Dendritic cell treated with granulocyte-macrophage colony-stimulating factor and Interleukin-4, amounts not matched to agents 40 ng/mL and 50 ng/mL, for 4 days (primary cell): ENCODE measurements at regions of chr12 and their contacts with region 1.

Region 1: DNA sequence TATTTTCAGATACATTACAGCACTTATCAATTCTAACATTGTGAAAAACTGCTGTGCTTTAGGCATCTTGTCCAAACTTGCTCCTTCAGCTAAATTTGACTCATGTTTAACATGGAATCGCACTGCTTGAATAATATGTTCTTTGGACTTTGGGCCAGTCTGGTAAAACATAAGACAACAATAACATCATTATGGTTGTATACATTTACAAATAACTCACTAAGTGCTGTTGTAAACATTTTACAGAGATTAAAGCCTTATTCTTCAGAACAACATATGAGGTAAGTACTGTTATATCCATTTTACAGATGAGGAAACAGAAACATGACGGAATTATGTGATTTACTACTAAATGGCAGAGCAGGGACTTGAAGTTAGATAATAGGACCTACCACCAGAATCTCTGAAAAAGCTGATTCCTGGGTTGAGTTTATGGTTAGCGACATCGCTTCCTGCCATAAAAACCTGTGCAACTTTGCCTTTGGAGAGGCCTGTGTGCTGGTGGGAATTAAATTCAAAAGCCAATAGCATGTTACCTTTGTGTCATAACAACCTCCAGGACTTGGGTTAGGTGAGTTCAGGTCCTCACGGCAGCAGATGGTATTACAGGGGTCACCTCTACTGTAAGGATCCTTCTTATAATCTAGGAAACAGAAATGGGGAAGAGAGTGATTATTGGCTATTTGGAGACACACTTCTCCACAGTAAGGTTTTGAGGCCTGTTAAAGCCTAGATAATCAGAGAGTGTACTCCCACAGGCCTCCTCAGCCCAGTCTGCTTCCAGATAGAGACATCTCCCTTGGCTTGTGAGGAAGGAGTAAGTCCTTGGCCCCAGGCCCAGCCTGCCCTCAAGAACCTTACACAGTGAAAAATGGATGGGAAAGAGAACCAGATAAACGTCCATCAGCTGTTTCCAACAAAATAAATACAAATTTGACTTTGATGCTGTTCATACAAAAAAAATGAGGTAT is 61.8 kb downstream of the PLBD1 start:
- H3K4me3 Mint-ChIP-seq: no peak overlapping the region
- H3K27ac Mint-ChIP-seq: no peak overlapping the region
- H3K4me1 Mint-ChIP-seq: peaks cover 5% of the 10 kb centered on the region
- H3K27me3 Mint-ChIP-seq: no peaks in the 10 kb centered on the region

Region 2: DNA sequence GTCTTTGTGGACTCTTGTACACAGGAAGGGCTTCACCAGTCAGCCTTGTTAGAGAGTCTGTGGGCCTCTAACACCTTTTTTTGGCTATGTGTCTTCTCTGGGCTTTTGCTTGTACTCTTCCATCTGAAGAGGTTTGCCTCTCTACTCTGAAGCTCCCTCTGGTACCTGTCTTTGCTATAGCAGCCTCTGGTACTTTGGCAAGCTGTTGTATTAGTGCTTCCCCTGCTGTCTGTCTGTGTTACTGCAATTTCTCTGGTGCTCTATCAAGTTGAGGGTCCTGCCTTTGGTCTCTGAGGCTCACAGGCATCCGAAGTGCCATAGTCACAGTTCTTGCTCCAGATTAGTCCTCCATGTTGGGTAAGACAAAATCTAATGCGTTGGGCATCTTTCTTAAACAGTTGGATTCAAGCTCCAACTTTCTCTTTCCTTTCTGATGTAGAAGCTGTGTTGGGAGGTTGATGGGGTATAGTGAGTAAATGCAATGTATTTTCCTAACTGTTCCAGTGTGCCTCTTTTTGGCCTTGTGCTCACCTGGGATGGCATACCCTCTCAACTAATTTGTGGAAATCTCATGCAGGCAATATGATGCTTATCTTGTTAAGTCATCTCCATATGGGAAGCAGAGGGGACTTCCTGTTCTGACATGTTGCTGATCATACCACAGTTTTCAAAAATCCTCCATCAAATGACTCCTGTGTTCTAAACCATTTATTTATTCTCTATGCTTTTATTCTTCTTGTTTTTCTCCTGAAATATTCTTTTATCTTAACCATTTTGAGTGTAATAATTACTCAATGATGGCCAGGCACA is 51.6 kb before region 1 on chr12:
- intact Hi-C with region 1: loop called (anchors 5 kb)
- H3K4me3 Mint-ChIP-seq: no peak overlapping the region
- H3K27ac Mint-ChIP-seq: no peak overlapping the region
- H3K4me1 Mint-ChIP-seq: peaks cover 27% of the 10 kb centered on the region
- H3K27me3 Mint-ChIP-seq: no peaks in the 10 kb centered on the region

Region 3: DNA sequence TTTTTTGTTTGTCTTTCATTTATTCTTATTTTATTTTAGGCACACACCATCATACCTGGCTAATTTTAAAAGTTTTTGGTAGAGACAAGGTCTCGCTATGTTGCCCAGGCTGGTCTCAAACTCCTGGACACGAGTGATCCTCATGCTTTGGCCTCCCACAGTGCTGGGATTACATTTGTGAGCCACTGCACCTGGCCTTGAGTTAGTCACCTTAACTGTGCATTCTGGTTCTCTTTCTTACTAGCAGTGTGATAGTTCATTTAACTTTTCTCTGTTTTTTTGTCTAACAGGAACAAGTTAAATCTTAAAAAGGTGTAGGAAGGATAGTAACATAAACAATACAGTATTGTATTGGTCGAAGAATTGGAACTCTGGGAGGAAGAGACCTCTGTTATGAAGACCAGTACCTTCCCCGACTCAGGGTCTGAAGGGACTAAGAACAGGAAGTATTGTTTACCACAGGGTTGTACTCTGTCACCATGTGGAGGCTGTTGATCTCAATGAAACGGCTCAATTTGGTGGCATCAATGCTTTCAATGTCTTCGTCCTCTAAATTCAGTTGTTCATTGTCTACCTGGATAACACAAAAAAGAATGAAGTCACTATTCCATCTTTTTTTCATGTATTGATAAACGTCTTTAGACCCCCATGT is 414.7 kb after region 1 on chr12:
- intact Hi-C with region 1: no loop called
- H3K4me3 Mint-ChIP-seq: no peak overlapping the region
- H3K27ac Mint-ChIP-seq: no peak overlapping the region
- H3K4me1 Mint-ChIP-seq: peaks cover 17% of the 10 kb centered on the region
- H3K27me3 Mint-ChIP-seq: no peaks in the 10 kb centered on the region

Region 4: GRCh38 chr12:15289192-15289591 is 783.3 kb after region 1 on chr12:
- intact Hi-C with region 1: no loop called
- H3K4me3 Mint-ChIP-seq: no peak overlapping the region
- H3K27ac Mint-ChIP-seq: no peak overlapping the region
- H3K4me1 Mint-ChIP-seq: no peaks in the 10 kb centered on the region
- H3K27me3 Mint-ChIP-seq: peaks cover 25% of the 10 kb centered on the region